GM23248 (cell line): ENCODE measurements at regions of chr17 and their contacts with region 1.

Region 1: DNA sequence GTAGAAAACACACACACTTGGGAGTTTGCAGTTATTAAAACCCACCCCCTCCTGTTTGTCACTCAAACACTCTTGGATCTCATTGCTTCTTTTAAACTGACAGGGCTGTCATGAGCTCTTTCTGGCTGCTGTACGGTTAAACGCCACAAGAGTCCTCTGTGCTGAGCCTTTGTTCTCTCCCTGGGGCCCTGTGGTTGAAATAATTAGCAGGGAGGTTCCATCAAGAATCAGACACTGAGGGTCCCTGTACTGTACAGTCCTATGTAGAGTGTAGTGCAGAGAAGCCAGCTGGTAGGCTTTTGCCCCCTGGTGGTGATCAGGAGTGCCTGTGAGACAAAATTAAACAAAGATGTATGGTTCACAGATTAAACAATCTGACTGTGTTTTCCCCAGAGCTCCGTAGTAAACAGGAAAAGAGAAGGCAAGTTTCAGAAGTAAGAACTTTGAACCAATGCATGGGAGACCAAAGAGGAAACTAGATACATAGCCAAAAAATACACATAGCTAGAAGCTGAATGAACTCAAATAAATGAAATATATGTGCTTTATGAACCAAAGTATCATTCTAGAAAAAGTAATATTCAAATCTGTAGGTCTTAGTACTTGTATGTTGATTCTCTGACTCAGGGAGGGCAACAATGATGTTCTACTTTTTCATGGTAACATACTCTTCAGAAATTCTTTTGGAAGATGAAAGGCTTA is 1.4 kb upstream of the SSH2 start:
- DNase-seq: peak; percentile 89
- H3K4me3 ChIP-seq: peak overlapping the region; percentile 80
- H3K27ac ChIP-seq: no peak overlapping the region
- H3K4me1 ChIP-seq: peaks cover 20% of the 10 kb centered on the region
- H3K27me3 ChIP-seq: no peaks in the 10 kb centered on the region

Region 2: GRCh38 chr17:29802246-29802645 is 129.1 kb before region 1 on chr17:
- in situ Hi-C with region 1: loop called (anchors 5 kb)
- DNase-seq: peak; percentile 55
- H3K4me3 ChIP-seq: no peak overlapping the region
- H3K27ac ChIP-seq: no peak overlapping the region
- H3K4me1 ChIP-seq: no peaks in the 10 kb centered on the region
- H3K27me3 ChIP-seq: no peaks in the 10 kb centered on the region